ENCODE measurements at regions of chr12 and their contacts with region 1.

Region 1: GRCh38 chr12:124036674-124037109 is 63.7 kb downstream of the ZNF664 start:
- DNase-seq: peak; percentile 55 to 61 (median 56)
- ATAC-seq: peak; percentile 73; the same call in 2 of the 3 replicates
- H3K4me3 ChIP-seq: no peak overlapping the region
- H3K27ac ChIP-seq: no peak overlapping the region
- H3K4me1 ChIP-seq: peaks cover 0 to 4% of the 10 kb centered on the region in 2 experiments; a peak in 2 of 5 replicates
- H3K27me3 ChIP-seq: peaks cover 16 to 26% of the 10 kb centered on the region in 2 experiments
- CTCF ChIP-seq: peak; percentile 75 to 96 (median 83)
- EP300 ChIP-seq: no peak
- POLR2A ChIP-seq: no peak
- RAD21 ChIP-seq: peak; percentile 91 to 92

Region 2: GRCh38 chr12:123801573-123802178 is 235.0 kb before region 1 on chr12:
- CTCF ChIA-PET with region 1: interaction called, 3 read pairs
- POLR2A ChIA-PET with region 1: no interaction called
- in situ Hi-C with region 1: no loop called
- intact Hi-C with region 1: loop called (anchors 2 kb)
- DNase-seq: peak in 1 of 4 experiments; percentile 31
- ATAC-seq: no peak
- H3K4me3 ChIP-seq: no peak overlapping the region
- H3K27ac ChIP-seq: no peak overlapping the region
- H3K4me1 ChIP-seq: no peaks in the 10 kb centered on the region; a peak in 1 of 5 replicates
- H3K27me3 ChIP-seq: peaks cover 11 to 20% of the 10 kb centered on the region in 2 experiments
- CTCF ChIP-seq: peak; percentile 35 to 73 (median 52); a peak in 4 of 6 replicates
- EP300 ChIP-seq: no peak
- POLR2A ChIP-seq: no peak
- RAD21 ChIP-seq: peak; percentile 50 to 77

Region 3: GRCh38 chr12:123905319-123905925 is 131.3 kb before region 1 on chr12:
- CTCF ChIA-PET with region 1: no interaction called
- POLR2A ChIA-PET with region 1: no interaction called
- in situ Hi-C with region 1: no loop called
- intact Hi-C with region 1: loop called (anchors 2 kb)
- DNase-seq: peak; percentile 74 to 76 (median 75)
- ATAC-seq: peak; percentile 49
- H3K4me3 ChIP-seq: no peak overlapping the region
- H3K27ac ChIP-seq: no peak overlapping the region
- H3K4me1 ChIP-seq: peaks cover 0 to 4% of the 10 kb centered on the region in 2 experiments; a peak in 1 of 5 replicates
- H3K27me3 ChIP-seq: peaks cover 54 to 68% of the 10 kb centered on the region in 2 experiments; a peak in 4 of 5 replicates
- CTCF ChIP-seq: peak; percentile 71 to 84 (median 78)
- EP300 ChIP-seq: no peak
- POLR2A ChIP-seq: no peak
- RAD21 ChIP-seq: peak; percentile 43 to 66

Region 4: GRCh38 chr12:123995023-123995748 is 41.5 kb before region 1 on chr12:
- CTCF ChIA-PET with region 1: interaction called, 3 read pairs
- POLR2A ChIA-PET with region 1: no interaction called
- in situ Hi-C with region 1: no loop called
- intact Hi-C with region 1: loop called (anchors 2 kb)
- DNase-seq: no peak
- ATAC-seq: no peak
- H3K4me3 ChIP-seq: no peak overlapping the region
- H3K27ac ChIP-seq: no peak overlapping the region
- H3K4me1 ChIP-seq: peaks cover 13 to 74% of the 10 kb centered on the region in 2 experiments
- H3K27me3 ChIP-seq: no peaks in the 10 kb centered on the region
- CTCF ChIP-seq: no peak
- EP300 ChIP-seq: no peak
- POLR2A ChIP-seq: no peak
- RAD21 ChIP-seq: no peak

Region 5: GRCh38 chr12:124024263-124024678 is 12.4 kb before region 1 on chr12:
- CTCF ChIA-PET with region 1: no interaction called
- POLR2A ChIA-PET with region 1: no interaction called
- in situ Hi-C with region 1: no loop called
- intact Hi-C with region 1: no loop called
- DNase-seq: peak in 2 of 4 experiments; percentile 38 to 46
- ATAC-seq: peak; percentile 61
- H3K4me3 ChIP-seq: no peak overlapping the region
- H3K27ac ChIP-seq: no peak overlapping the region
- H3K4me1 ChIP-seq: peaks cover 15 to 19% of the 10 kb centered on the region in 2 experiments; a peak in 4 of 5 replicates
- H3K27me3 ChIP-seq: peaks cover 0 to 4% of the 10 kb centered on the region in 2 experiments; a peak in 1 of 5 replicates
- CTCF ChIP-seq: no peak
- EP300 ChIP-seq: no peak
- POLR2A ChIP-seq: no peak
- RAD21 ChIP-seq: no peak; a peak in 1 of 4 replicates

Region 6: DNA sequence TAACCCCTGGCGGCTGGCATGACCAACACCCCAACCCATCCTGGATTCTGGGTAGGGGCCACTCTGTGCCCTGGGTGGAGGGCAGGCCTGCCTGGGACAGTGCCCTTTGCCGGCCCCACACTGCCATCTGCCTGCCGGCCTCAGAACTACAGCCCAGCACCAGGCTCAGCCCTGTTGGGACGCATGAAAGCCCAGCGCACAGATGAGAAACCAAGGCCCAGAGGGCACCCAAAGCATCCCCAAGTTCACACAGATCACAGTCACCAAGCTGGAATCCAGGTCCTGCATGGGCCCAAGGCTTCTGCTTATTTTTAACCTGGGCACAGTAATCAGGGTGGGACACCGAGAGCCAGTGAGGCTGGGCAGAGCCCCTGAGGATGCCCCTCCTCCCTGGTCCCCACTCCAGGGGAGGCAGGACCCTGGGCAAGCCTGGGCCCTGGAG is 284.4 kb after region 1 on chr12:
- CTCF ChIA-PET with region 1: interaction called, 32 read pairs
- POLR2A ChIA-PET with region 1: interaction called, 3 read pairs
- in situ Hi-C with region 1: loop called (anchors 5 kb)
- intact Hi-C with region 1: loop called (anchors 1 kb)
- DNase-seq: peak; percentile 61 to 77 (median 74)
- ATAC-seq: peak; percentile 94
- H3K4me3 ChIP-seq: no peak overlapping the region
- H3K27ac ChIP-seq: no peak overlapping the region
- H3K4me1 ChIP-seq: no peaks in the 10 kb centered on the region
- H3K27me3 ChIP-seq: peaks cover 23 to 35% of the 10 kb centered on the region in 2 experiments; a peak in 3 of 5 replicates
- CTCF ChIP-seq: peak; percentile 83 to 93 (median 86)
- EP300 ChIP-seq: no peak
- POLR2A ChIP-seq: no peak
- RAD21 ChIP-seq: peak; percentile 92 to 95

Region 7: DNA sequence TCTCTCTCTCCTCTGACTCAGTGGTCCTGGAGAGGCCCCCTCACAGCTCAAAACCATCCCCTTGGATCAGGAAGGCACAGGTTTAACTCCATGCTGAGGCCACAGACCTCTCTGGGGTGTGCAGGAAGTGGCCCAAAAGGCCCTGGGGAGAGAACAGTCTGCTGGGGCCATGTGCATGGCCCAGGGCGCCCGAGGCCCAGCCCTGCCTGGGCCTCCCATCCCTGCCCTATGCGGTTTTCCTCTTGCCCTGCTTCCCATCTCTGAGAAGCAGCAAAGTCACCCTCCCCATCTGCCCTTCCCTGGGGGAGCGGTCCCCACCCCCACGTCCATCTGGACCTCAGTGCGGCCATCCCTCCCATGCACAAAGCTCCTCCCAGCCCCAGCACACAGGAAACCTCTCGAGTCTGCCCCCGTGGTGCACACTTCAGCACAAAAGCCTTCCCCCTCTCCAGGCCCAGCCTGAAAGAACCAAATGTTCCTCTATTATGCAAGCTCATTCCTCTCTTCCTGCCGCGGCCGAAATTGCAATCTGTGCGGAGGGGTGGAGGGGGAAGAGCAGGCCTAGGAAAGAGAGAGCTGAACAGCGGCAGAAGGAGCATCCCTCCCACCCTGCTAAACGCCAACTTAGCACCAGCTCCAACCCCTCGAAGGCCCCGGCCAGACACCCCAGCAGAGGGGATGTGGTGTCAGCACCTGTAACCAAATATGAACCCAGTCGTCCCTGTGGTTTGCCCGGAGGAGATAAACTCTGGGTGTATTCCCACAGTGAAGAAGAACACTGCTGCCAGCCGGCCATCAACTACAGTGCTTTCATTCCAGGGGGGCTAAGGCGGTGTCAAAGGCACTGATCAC is 718.5 kb after region 1 on chr12:
- CTCF ChIA-PET with region 1: no interaction called
- POLR2A ChIA-PET with region 1: no interaction called
- in situ Hi-C with region 1: no loop called
- intact Hi-C with region 1: loop called (anchors 5 kb)
- DNase-seq: no peak
- ATAC-seq: peak; percentile 22; the same call in 2 of the 3 replicates
- H3K4me3 ChIP-seq: no peak overlapping the region
- H3K27ac ChIP-seq: no peak overlapping the region
- H3K4me1 ChIP-seq: peaks cover 0 to 10% of the 10 kb centered on the region in 2 experiments; a peak in 1 of 5 replicates
- H3K27me3 ChIP-seq: peaks cover 61 to 91% of the 10 kb centered on the region in 2 experiments
- CTCF ChIP-seq: no peak
- EP300 ChIP-seq: no peak
- POLR2A ChIP-seq: no peak
- RAD21 ChIP-seq: no peak

Region 8: DNA sequence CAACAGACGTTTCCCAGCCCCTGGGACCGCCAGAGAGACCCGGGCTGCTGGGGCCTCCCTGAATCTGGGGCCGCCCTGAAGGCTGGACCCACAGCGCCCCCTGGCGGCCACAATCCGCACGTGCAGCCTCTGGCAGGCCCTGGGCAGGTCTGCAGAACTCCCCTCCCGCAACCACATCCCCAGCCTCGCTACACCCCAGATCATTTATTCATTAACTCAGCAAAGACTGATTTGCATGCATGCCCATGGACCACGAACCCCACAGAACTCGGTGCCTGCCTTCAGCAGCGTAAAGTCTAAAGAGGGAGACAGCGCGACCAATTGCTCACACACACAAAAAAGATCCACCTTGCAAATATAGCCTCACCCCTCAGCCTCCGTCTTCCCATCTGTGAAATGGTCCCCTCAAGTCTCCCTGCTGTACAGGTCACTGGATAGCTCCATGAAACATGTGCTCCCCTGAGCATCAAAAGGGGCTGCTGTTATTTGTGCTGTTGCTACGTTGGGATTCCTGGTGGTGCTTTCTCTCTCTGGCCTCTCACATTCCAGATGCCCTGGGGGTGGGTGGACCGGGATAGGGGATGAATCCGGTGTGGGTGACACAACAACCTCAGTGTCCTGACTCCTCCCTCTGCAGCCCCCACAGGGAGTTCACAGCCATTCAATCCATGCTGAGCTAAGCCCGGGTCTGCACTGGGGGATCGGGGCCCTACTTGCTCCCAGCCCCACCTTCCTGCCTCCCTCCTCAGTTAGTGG is 730.6 kb after region 1 on chr12:
- CTCF ChIA-PET with region 1: interaction called, 8 read pairs
- POLR2A ChIA-PET with region 1: interaction called, 4 read pairs
- in situ Hi-C with region 1: loop called (anchors 5 kb)
- intact Hi-C with region 1: loop called (anchors 1 kb)
- DNase-seq: peak; percentile 75 to 93 (median 88)
- ATAC-seq: peak; percentile 92
- H3K4me3 ChIP-seq: no peak overlapping the region
- H3K27ac ChIP-seq: no peak overlapping the region
- H3K4me1 ChIP-seq: peaks cover 0 to 12% of the 10 kb centered on the region in 2 experiments; a peak in 2 of 5 replicates
- H3K27me3 ChIP-seq: peaks cover 0 to 15% of the 10 kb centered on the region in 2 experiments; a peak in 2 of 5 replicates
- CTCF ChIP-seq: peak; percentile 88 to 94 (median 91)
- EP300 ChIP-seq: no peak
- POLR2A ChIP-seq: no peak
- RAD21 ChIP-seq: peak; percentile 81 to 96